ENCODE measurements at regions of chr3 and their contacts with region 1.

Region 1: DNA sequence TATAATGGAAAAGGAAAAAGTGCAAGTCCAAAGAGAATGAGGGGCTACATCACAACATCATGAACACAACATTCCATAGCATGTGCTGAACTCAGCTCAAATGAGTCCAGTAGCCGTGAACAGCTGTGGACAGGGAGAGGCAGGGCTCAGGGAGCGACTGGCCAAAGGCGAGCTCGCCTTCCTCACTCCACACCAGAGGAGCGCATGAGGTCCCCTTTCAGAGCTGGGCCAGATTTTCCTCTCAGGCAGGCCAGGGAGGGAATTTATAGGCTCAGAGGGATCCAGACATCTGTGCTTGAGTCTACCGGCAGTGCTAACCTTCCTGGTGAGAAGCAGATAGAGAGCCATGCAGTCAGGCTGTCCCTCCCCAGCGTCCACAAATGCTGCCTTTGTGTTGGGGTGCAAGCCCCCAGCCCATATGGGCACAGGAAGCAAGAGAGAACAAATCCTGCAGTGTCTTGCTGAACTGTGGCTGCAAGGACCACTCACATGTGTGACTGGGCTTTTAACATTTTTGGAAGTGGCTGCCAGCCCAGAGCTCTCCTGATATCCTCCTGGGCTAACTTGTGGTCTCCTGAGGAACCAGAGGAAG is 32.5 kb downstream of the ARHGEF3 start:
- DNase-seq: no peak
- H3K4me3 Mint-ChIP-seq: no peak overlapping the region
- H3K27ac Mint-ChIP-seq: peak overlapping the region; percentile 38
- H3K4me1 Mint-ChIP-seq: peaks cover 60% of the 10 kb centered on the region
- H3K27me3 Mint-ChIP-seq: no peaks in the 10 kb centered on the region

Region 2: DNA sequence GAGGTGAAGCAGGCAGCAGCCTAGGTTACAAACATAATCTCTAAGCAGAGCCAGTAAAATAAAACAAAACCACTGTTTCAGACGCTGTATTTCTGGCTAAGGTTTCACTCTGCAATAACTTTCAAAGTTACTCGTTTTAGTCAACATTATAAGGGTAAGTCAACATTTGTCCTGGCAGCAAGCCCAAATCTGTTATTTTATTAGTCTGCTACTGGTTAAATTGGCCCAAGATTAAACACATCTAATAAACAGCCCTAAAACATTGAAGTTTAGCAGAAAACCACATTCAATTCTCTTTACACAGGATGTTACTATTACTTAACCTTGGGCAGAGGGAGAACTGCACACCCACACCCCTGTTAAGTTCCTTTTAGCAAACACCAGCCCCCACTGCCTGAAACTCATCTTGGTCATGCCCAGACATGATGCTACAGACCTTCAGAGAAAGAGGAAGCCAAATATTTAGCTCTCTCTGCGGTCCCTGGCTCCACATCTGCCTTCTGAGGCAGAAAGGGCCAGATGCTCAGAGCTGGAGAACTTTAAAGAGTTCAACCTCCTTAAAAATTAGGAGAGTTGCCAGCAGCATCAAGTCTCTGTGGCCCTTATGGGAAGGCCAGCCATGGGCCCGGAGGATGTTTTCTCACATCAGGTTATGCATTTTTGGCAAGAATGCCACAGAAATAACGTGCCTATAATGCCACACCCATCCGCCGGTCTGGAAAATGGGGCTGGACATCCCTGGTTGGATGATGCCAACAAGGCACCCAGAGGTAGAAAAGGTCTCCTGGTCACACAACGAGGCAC is 14.6 kb after region 1 on chr3:
- CTCF ChIA-PET with region 1: interaction called, 11 read pairs
- POLR2A ChIA-PET with region 1: interaction called, 4 read pairs
- DNase-seq: peak; percentile 88
- H3K4me3 Mint-ChIP-seq: peak overlapping the region; percentile 67
- H3K27ac Mint-ChIP-seq: peak overlapping the region; percentile 90
- H3K4me1 Mint-ChIP-seq: peaks cover 98% of the 10 kb centered on the region
- H3K27me3 Mint-ChIP-seq: no peaks in the 10 kb centered on the region